HEK293 (cell line): ENCODE measurements at regions of chr2 and their contacts with region 1.

Region 1: GRCh38 chr2:85813982-85814801 is 60.4 kb downstream of the ATOH8 start:
- H3K4me3 ChIP-seq: no peak overlapping the region
- H3K27ac ChIP-seq: no peak overlapping the region
- H3K4me1 ChIP-seq: no peaks in the 10 kb centered on the region
- CTCF ChIP-seq: peak; percentile 85

Region 2: GRCh38 chr2:85723707-85724360 is 90.4 kb before region 1 on chr2:
- CTCF ChIA-PET with region 1: interaction called, 141 read pairs
- POLR2A ChIA-PET with region 1: interaction called, 3 read pairs
- H3K4me3 ChIP-seq: no peak overlapping the region
- H3K27ac ChIP-seq: no peak overlapping the region
- H3K4me1 ChIP-seq: no peaks in the 10 kb centered on the region
- CTCF ChIP-seq: no peak

Region 3: GRCh38 chr2:85741833-85742455 is 72.2 kb before region 1 on chr2:
- CTCF ChIA-PET with region 1: interaction called, 18 read pairs
- POLR2A ChIA-PET with region 1: interaction called, 3 read pairs
- H3K4me3 ChIP-seq: no peak overlapping the region
- H3K27ac ChIP-seq: peak overlapping the region; percentile 17; the same call in 1 of the 2 replicates
- H3K4me1 ChIP-seq: peaks cover 8% of the 10 kb centered on the region
- CTCF ChIP-seq: no peak

Region 4: DNA sequence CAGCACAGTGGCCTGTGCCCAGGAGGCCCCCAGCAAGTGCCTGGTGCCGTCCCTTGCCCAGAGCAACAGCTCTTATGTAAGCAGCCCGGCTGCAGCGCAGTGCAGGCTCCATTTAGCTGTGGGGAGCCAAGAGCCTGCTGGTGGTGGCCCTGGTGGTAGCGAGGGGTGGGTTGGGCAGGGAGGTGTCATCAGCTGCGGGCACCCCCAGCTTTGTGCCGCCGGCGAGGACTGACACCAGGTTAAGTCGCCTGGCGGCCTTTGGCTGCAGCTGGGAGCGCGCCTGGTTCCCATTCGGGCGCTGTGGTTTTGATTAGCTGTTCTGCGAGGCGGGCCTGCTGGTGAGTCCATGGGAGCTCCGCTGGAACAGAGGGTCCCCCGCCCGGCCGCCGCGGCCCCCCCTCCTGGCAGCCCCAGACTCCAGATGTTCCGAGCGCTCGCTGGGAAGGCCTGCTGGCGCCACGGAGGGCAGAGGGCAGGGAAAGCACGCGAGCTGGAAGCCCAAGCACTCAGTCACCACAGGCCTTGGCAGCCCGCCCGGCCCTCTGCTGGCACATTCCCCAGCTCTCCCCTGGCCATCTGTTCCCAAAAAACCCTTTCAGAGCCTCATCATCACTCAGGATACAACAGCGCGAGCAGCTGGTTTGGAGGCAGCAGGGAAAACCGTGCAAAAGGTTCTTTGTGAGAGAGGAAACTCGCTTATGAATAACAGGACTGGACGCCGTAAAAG is 42.0 kb before region 1 on chr2:
- CTCF ChIA-PET with region 1: interaction called, 16 read pairs
- POLR2A ChIA-PET with region 1: no interaction called
- H3K4me3 ChIP-seq: no peak overlapping the region
- H3K27ac ChIP-seq: peak overlapping the region; percentile 80
- H3K4me1 ChIP-seq: peaks cover 41% of the 10 kb centered on the region
- CTCF ChIP-seq: peak; percentile 91

Region 5: GRCh38 chr2:85790499-85791188 is 23.5 kb before region 1 on chr2:
- CTCF ChIA-PET with region 1: interaction called, 14 read pairs
- POLR2A ChIA-PET with region 1: no interaction called
- H3K4me3 ChIP-seq: no peak overlapping the region
- H3K27ac ChIP-seq: no peak overlapping the region
- H3K4me1 ChIP-seq: peaks cover 12% of the 10 kb centered on the region; the same call in 1 of the 2 replicates
- CTCF ChIP-seq: no peak